HEK293T (cell line): ENCODE measurements at regions of chr14 and their contacts with region 1.

Region 1: GRCh38 chr14:50667996-50668825 is at the start of gene SAV1:
- DNase-seq: peak; percentile 70

Region 2: DNA sequence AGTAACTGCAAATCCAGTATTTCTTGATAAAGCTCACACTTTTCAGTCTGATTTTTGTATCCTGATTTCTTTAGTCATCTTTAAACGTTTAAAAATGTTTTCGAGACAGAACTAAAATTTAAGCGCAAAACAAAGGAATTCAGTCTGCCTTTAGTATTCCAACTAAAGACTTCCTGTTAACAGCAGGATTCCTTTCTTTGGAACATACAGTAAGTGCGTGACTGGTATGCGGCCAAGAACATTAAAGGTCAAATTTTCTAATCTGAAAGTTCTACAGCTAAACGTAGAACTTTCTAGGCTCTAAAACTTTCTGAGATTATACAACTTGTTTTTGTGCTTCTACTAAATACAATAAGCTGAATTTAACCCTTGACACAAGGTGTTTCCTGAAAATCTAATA is 10.0 kb before region 1 on chr14:
- CTCF ChIA-PET with region 1: no interaction called
- POLR2A ChIA-PET with region 1: interaction called, 26 read pairs
- DNase-seq: no peak

Region 3: DNA sequence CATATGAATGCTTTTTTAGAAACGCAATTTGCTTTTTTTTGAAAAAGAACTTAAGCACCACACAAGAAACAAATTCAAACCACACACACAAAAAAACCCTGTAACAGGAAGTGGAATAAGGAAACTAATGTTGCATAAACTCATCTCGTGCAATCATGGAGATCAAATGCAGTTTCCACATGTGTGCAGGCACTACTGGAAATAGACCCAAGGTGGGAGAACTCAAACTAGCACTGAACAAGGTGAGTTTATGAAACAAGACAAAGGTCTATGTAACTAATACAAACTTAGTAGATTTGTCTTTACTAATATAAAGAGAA is 145.3 kb after region 1 on chr14:
- CTCF ChIA-PET with region 1: no interaction called
- POLR2A ChIA-PET with region 1: no interaction called
- DNase-seq: no peak

Region 4: DNA sequence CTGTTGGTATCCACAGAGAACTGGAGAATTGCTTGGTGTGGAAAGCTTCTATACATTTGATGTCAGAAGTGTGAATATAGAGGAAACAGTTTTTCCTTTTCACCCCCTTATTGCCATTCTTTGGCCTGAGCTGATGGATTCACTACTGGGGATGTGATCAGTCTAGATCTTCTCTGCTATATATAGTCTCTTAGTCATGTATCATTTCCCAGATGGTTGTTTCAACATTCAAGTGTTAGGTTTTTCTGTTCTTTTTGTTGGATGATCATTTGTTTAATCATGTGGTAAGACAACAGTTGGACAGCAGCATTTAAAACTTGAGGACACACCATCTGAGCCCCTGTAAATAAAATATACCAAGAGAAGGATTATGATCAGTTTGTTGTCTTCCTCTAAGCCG is 601.4 kb after region 1 on chr14:
- CTCF ChIA-PET with region 1: no interaction called
- POLR2A ChIA-PET with region 1: no interaction called
- DNase-seq: no peak